ENCODE measurements at regions of chr15 and their contacts with region 1.

Region 1: DNA sequence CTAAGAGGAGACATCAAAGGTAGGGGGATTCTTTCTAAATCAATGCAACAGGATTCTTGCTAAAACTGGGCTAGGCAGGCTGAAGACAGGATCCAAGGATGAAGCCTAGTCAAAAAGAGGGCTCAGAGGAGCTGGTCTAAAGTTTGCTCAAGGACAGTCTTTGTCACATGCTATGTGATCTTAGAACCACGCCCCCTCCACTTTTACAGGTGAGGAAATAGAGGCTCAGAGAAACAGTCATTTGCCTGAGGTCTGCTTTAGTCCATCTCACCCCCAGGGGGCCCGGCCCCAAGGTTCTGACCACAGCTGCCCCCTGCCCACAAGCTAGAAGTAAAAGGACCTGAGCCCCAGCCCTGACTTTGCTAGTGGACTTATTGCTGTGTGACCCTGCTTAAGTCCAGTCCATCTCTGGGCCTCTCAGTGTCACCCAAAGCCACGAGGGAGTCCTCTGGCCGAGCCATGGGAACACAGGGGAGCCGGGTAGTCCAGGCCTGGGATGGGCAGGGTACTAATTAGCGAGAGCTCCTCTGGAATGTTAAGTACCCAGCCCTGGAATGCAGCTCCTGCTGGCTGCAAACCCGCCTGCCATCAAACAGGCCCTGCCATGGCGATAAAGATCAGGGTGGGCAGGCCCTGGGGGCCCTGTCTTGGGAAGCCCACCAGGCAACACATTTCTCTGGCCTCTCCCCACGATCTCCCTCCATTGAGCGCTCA is 132.7 kb downstream of the SMAD6 start:
- DNase-seq: no peak
- ATAC-seq: no peak
- H3K4me3 ChIP-seq: no peak overlapping the region
- H3K27ac ChIP-seq: no peak overlapping the region
- H3K4me1 ChIP-seq: no peaks in the 10 kb centered on the region
- H3K27me3 ChIP-seq: no peaks in the 10 kb centered on the region
- CTCF ChIP-seq: no peak

Region 2: DNA sequence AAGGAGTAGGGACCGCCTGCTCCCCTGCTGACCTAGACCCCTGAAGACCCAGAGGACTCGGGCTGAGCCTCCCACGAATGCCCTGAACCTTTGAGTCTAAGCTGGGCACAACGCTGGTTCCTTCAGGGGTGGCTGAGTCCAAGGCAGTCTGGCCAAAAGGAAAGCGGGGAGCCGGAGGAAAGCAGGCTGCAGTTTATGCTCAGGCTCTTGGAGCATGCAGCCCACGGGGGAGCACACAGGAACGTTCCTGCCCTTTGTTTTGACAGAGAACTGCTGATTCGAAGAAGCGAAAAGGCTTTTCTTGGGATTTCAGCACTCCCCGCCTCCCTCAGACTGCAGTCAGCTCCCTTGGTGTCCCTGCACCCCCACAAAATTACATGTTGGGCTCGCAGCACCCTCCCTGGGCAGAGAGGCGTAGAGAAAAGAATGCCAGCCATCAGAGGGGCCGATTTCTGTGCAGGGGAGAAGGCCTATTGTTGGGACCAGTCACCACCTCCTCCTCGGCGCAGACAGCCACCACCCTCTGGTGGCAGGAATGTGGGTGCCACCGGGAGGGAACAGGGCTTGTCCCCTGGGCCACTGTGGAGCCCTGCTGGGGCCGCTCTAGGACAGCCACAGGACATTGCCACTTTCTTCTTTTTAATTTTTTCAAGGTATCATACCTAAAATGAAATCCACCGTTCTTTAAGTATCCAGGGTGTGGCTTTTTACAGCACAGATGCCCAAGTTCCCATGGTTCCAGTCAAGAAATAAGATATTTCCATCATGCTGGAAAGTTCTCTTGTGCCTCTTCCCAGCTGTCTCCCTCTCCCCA is 60.6 kb before region 1 on chr15:
- intact Hi-C with region 1: no loop called
- DNase-seq: peak; percentile 84 to 91
- ATAC-seq: peak; percentile 96 to 99 (median 97)
- H3K4me3 ChIP-seq: no peak overlapping the region
- H3K27ac ChIP-seq: peak overlapping the region; percentile 30
- H3K4me1 ChIP-seq: peaks cover 16% of the 10 kb centered on the region
- H3K27me3 ChIP-seq: no peaks in the 10 kb centered on the region
- CTCF ChIP-seq: peak; percentile 97

Region 3: DNA sequence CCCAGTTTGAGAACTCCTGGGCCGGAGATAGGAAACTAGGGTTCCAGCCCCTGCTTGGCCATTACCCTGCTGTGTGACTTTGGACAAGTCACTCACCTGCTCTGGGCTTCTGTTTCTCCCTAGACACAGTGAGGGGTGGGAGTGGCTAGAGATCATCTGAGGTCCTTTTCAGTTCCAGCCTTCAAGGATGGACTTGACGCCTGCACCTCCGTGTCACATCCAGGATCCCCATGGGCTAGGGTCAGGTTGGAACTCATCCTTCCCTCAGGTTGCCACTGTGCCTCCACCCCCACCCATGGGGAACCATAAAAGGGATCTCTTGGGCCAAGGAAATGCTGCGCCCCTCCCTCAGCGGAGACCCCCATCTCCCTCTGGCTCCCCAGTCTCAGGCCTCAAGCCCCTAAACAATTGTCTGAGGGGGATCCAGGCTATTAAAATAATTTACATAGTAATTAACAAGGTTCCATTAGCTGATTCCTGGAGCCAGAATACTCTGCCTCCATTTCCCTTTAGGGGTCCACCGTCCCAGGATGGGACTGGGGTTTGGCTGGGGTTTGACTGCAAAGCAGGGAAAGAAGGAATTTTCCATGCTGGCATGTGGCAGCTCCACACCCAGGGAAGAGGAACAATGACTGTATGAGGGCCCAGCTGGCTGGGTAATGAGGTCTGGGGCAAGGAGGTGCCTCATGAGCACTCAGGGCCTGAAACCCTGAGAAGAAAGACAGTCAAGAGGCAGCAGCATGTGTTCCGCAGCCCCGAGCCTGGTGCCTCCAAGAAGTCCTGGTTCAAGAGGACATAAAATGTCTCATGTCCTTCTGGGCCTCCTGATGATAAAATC is 45.0 kb after region 1 on chr15:
- intact Hi-C with region 1: loop called in 1 of 2 experiments (anchors 1 kb)
- DNase-seq: no peak
- ATAC-seq: no peak
- H3K4me3 ChIP-seq: no peak overlapping the region
- H3K27ac ChIP-seq: no peak overlapping the region
- H3K4me1 ChIP-seq: peaks cover 40% of the 10 kb centered on the region
- H3K27me3 ChIP-seq: no peaks in the 10 kb centered on the region
- CTCF ChIP-seq: no peak

Region 4: GRCh38 chr15:67109141-67110034 is 274.6 kb after region 1 on chr15:
- intact Hi-C with region 1: no loop called
- DNase-seq: peak; percentile 79 to 89
- ATAC-seq: peak in 2 of 4 donors; percentile 11 to 23
- H3K4me3 ChIP-seq: no peak overlapping the region
- H3K27ac ChIP-seq: peak overlapping the region; percentile 90
- H3K4me1 ChIP-seq: peaks cover 79% of the 10 kb centered on the region
- H3K27me3 ChIP-seq: no peaks in the 10 kb centered on the region
- CTCF ChIP-seq: no peak